Esophagus muscularis mucosa (tissue), 4 donors: ENCODE measurements at regions of chr19 and their contacts with region 1.

Region 1: GRCh38 chr19:52942386-52943133 is 19.3 kb upstream of the ZNF888 start:
- DNase-seq: peak; percentile 99
- H3K4me3 ChIP-seq: peak overlapping the region; percentile 63 to 89 (median 81)
- H3K27ac ChIP-seq: peak overlapping the region; percentile 79 to 85 (median 81)
- H3K4me1 ChIP-seq: peaks cover 10 to 31% (median 20%) of the 10 kb centered on the region in 4 donors
- H3K27me3 ChIP-seq: no peaks in the 10 kb centered on the region
- CTCF ChIP-seq: no peak
- EP300 ChIP-seq: no peak
- POLR2A ChIP-seq: peak; percentile 50

Region 2: DNA sequence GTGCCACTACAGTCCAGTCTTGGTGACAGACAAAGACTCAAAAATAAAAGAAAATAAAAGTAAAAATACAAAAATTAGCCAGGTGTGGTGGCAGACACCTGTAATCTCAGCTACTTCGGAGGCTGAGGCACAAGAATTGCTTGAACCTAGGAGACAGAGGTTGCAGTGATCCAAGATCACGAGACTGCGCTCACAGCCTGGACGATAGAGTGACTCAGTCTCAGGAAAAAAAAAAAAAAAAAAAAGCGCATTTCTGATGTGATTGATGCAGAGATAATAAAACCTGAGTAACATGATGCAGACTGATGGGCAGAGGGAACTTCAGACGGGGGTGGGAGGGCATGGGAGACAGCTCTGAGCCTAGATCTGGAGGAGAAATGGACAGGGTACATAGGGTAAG is 180.9 kb before region 1 on chr19:
- intact Hi-C with region 1: no loop called
- DNase-seq: no peak
- H3K4me3 ChIP-seq: no peak overlapping the region
- H3K27ac ChIP-seq: no peak overlapping the region
- H3K4me1 ChIP-seq: no peaks in the 10 kb centered on the region
- H3K27me3 ChIP-seq: no peaks in the 10 kb centered on the region
- CTCF ChIP-seq: no peak
- EP300 ChIP-seq: no peak
- POLR2A ChIP-seq: no peak

Region 3: DNA sequence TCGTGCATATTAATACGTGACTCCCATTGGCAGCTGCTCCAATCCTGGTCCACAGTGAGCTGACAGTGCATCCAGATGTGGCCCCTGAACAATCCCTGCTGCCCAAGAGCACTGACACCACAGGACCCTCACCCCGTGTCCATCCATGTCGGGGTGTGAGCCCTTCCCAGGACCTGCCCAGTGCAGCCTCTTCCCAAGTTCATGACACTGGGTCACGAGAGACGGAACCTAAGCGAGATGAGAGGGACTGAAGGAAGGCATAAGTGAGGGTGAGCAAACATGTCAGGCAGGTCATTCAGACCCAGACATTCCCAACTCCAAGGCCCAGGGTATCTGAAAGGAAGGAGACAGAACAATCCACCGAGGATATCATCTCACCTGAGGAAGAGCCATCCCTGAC is 88.7 kb before region 1 on chr19:
- intact Hi-C with region 1: no loop called
- DNase-seq: no peak
- H3K4me3 ChIP-seq: no peak overlapping the region
- H3K27ac ChIP-seq: no peak overlapping the region
- H3K4me1 ChIP-seq: peaks cover 0 to 15% (median 14%) of the 10 kb centered on the region in 4 donors
- H3K27me3 ChIP-seq: no peaks in the 10 kb centered on the region
- CTCF ChIP-seq: no peak
- EP300 ChIP-seq: no peak
- POLR2A ChIP-seq: no peak

Region 4: GRCh38 chr19:52897144-52897935 is 45.2 kb before region 1 on chr19 and contains the start of gene ZNF320:
- intact Hi-C with region 1: loop called (anchors 10 kb)
- DNase-seq: peak; percentile 99
- H3K4me3 ChIP-seq: peak within 1 kb of the TSS; percentile 67 to 88 (median 78)
- H3K27ac ChIP-seq: peak within 1 kb of the TSS; percentile 82 to 92 (median 92)
- H3K4me1 ChIP-seq: peaks cover 12 to 21% (median 18%) of the 10 kb centered on the region in 4 donors
- H3K27me3 ChIP-seq: no peaks in the 10 kb centered on the region
- CTCF ChIP-seq: no peak
- EP300 ChIP-seq: no peak
- POLR2A ChIP-seq: no peak
- total RNA-seq, gene ZNF320: 4.2 to 11.6 (median 10.2) TPM

Region 5: GRCh38 chr19:52962394-52963246 is 20.1 kb after region 1 on chr19 and contains the start of gene ZNF816:
- intact Hi-C with region 1: loop called (anchors 2 kb)
- DNase-seq: peak; percentile 99
- H3K4me3 ChIP-seq: peak within 1 kb of the TSS; percentile 64 to 73 (median 68)
- H3K27ac ChIP-seq: peak within 1 kb of the TSS; percentile 78 to 86 (median 82)
- H3K4me1 ChIP-seq: peaks cover 14 to 21% (median 21%) of the 10 kb centered on the region in 4 donors
- H3K27me3 ChIP-seq: no peaks in the 10 kb centered on the region
- CTCF ChIP-seq: peak in 1 of 3 experiments; percentile 5
- EP300 ChIP-seq: no peak
- POLR2A ChIP-seq: no peak
- total RNA-seq, gene ZNF816: 4.0 to 12.9 (median 6.0) TPM